ENCODE measurements at regions of chr1 and their contacts with region 1.

Region 1: DNA sequence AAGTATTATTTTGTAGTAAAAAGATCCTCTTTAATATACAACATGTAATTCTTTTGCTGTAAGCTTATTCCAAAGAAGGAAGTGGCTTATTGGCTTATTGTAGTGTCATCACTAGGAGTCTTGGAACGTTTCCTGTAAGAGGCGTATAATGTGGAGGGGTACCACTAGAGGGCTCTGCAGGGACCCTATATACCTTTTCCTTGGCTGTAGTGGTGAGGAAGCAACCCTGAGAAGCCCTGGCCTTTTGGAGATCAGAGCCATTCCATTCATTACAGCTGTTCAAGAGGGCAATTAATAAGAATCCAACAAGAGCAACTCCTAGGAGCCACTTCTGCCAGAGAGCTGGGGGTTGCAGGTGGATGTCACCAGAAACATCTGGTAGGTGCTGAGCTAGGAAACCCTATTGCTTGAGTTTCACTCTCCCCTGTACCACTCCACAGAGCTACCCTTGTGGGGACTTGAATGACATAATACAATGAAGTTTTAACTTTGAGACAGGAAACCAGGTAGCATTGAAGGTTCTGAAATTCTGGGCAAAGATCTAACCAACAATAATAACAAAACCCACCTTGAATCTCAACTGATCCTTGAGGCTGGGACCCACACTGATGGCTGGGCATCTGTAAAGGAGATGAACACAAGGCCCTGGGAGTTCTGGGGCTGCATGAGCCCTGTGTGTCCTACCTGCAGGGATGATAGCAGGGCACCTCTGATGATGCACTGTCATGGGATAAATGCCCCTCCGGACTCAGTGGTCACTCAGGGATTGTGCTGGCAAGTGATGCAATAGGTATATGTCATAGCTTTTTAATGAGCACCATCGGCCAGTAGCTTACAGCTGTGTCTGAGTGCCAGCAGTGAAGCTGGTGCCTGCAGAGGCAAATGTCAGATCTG is 160.2 kb upstream of the COA6 start:
- DNase-seq: peak; percentile 63 to 78 (median 71)
- H3K4me3 ChIP-seq: peak overlapping the region in 2 of 7 experiments; percentile 74 to 85
- H3K27ac ChIP-seq: no peak overlapping the region
- H3K4me1 ChIP-seq: peaks cover 5 to 28% (median 15%) of the 10 kb centered on the region in 4 experiments
- H3K27me3 ChIP-seq: peaks cover 0 to 21% (median 10%) of the 10 kb centered on the region in 5 experiments

Region 2: GRCh38 chr1:234230414-234230862 is 17.4 kb after region 1 on chr1:
- CTCF ChIA-PET with region 1: interaction called, 25 read pairs
- POLR2A ChIA-PET with region 1: no interaction called
- DNase-seq: peak; percentile 34 to 86 (median 80)
- H3K4me3 ChIP-seq: peak overlapping the region in 5 of 7 experiments; percentile 1 to 51 (median 16)
- H3K27ac ChIP-seq: no peak overlapping the region
- H3K4me1 ChIP-seq: peaks cover 5 to 29% (median 15%) of the 10 kb centered on the region in 4 experiments
- H3K27me3 ChIP-seq: peaks cover 0 to 4% (median 3%) of the 10 kb centered on the region in 5 experiments

Measured in common myeloid progenitor, CD34-positive (primary cell).